B cell (primary cell): ENCODE measurements at regions of chr10 and their contacts with region 1.

Region 1: GRCh38 chr10:70146489-70147258 is at the start of gene TYSND1:
- DNase-seq: peak; percentile 93
- ATAC-seq: peak; percentile 84
- H3K4me3 ChIP-seq: peak within 1 kb of the TSS; percentile 53 to 91 (median 81)
- H3K4me3 Mint-ChIP-seq: peak within 1 kb of the TSS; percentile 96
- H3K27ac ChIP-seq: peak within 1 kb of the TSS; percentile 84 to 93
- H3K27ac Mint-ChIP-seq: peak within 1 kb of the TSS; percentile 97
- H3K4me1 ChIP-seq: peaks cover 14 to 22% of the 10 kb centered on the region in 2 donors
- H3K4me1 Mint-ChIP-seq: peaks cover 37% of the 10 kb centered on the region
- H3K27me3 ChIP-seq: no peaks in the 10 kb centered on the region
- H3K27me3 Mint-ChIP-seq: no peaks in the 10 kb centered on the region
- CTCF ChIP-seq: peak; percentile 76
- total RNA-seq, gene TYSND1: 34.1 and 34.7 TPM in 2 replicates

Region 2: GRCh38 chr10:69657430-69657829 is 489.2 kb before region 1 on chr10:
- CTCF ChIA-PET with region 1: no interaction called
- POLR2A ChIA-PET with region 1: no interaction called
- intact Hi-C with region 1: no loop called
- DNase-seq: no peak
- ATAC-seq: no peak
- H3K4me3 ChIP-seq: no peak overlapping the region
- H3K4me3 Mint-ChIP-seq: no peak overlapping the region
- H3K27ac ChIP-seq: no peak overlapping the region
- H3K27ac Mint-ChIP-seq: no peak overlapping the region
- H3K4me1 ChIP-seq: no peaks in the 10 kb centered on the region
- H3K4me1 Mint-ChIP-seq: no peaks in the 10 kb centered on the region
- H3K27me3 ChIP-seq: peaks cover 0 to 3% (median 0%) of the 10 kb centered on the region in 4 experiments
- H3K27me3 Mint-ChIP-seq: peaks cover 26% of the 10 kb centered on the region
- CTCF ChIP-seq: no peak

Region 3: DNA sequence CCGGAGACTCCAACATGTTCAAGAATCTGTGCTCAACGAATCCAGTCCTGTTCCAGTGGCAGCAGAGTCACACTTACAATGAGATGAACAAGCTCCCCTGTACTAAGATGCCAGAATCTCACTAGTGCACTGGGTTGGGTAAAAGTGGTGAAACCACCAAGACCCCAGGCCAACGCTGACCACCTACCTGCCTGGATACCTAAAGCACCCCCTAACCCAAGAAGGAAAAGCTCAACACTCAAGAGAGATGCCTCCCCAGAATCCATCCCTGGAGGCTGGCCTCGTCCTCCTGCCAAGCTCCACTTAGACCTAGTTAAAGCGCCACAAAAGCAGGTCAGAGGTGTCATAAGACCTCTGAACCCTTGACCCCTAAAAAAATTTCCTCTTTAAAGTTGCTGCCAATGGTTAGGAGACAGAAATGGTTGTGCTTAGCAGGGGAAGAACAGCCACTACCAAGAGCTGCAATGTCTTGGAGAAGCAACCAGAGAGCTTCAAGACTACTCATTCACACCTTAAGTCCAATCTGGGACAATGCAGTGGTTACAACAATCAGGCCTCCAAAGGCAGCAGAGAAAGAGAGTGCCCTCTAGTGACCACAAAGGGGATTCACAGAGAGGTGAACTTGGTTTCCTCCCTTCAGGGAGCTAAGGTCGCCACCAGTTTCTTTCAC is 188.7 kb before region 1 on chr10:
- CTCF ChIA-PET with region 1: interaction called, 14 read pairs
- POLR2A ChIA-PET with region 1: no interaction called
- intact Hi-C with region 1: no loop called
- DNase-seq: peak; percentile 23
- ATAC-seq: no peak
- H3K4me3 ChIP-seq: no peak overlapping the region
- H3K4me3 Mint-ChIP-seq: no peak overlapping the region
- H3K27ac ChIP-seq: no peak overlapping the region
- H3K27ac Mint-ChIP-seq: peak overlapping the region; percentile 59
- H3K4me1 ChIP-seq: peaks cover 6 to 18% of the 10 kb centered on the region in 2 donors
- H3K4me1 Mint-ChIP-seq: peaks cover 26% of the 10 kb centered on the region
- H3K27me3 ChIP-seq: no peaks in the 10 kb centered on the region
- H3K27me3 Mint-ChIP-seq: peaks cover 9% of the 10 kb centered on the region
- CTCF ChIP-seq: peak; percentile 55

Region 4: DNA sequence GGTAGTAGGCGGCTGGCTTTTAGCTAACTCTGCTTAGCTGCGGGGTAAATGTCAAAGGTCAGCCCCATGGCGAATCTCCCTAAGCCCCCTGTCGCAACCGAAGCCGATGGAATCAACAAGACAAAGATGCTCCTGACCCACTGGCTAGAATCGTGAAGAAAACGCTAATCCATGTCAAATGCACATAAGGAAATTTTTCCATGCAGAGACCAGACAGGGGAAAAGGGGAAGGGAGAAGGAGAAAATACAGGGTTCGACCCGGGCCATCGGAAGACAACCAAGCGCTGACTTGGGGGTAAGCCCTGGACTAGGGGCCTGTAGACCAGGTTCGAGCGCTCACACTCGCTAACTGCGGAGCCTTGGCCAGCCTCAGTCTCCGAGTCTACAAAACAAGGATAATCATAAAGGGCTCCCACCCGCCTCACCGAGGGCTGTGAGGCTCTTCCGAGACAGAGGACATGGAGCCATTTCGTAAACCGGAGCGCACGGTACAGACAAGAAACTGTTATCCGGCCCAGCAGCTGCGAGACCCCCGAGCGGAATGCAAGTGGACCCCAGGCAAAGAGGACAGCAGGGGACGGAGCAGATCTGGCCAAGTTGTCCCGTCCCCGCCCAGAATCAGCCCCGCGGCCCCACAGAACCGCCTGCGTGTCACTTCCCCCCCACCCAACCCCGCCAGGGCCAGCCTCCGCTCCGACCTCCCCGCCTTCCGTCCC is 23.1 kb after region 1 on chr10:
- CTCF ChIA-PET with region 1: interaction called, 62 read pairs
- POLR2A ChIA-PET with region 1: interaction called, 35 read pairs
- intact Hi-C with region 1: loop called (anchors 1 kb)
- DNase-seq: no peak
- ATAC-seq: peak; percentile 18
- H3K4me3 ChIP-seq: peak overlapping the region; percentile 71 to 96 (median 86)
- H3K4me3 Mint-ChIP-seq: peak overlapping the region; percentile 91
- H3K27ac ChIP-seq: peak overlapping the region; percentile 80 to 93
- H3K27ac Mint-ChIP-seq: peak overlapping the region; percentile 94
- H3K4me1 ChIP-seq: peaks cover 21 to 27% of the 10 kb centered on the region in 2 donors
- H3K4me1 Mint-ChIP-seq: peaks cover 49% of the 10 kb centered on the region
- H3K27me3 ChIP-seq: no peaks in the 10 kb centered on the region
- H3K27me3 Mint-ChIP-seq: no peaks in the 10 kb centered on the region
- CTCF ChIP-seq: no peak

Region 5: GRCh38 chr10:70355051-70356021 is 208.7 kb after region 1 on chr10:
- CTCF ChIA-PET with region 1: interaction called, 5 read pairs
- POLR2A ChIA-PET with region 1: no interaction called
- intact Hi-C with region 1: loop called (anchors 10 kb)
- DNase-seq: peak; percentile 81
- ATAC-seq: peak; percentile 81
- H3K4me3 ChIP-seq: peak overlapping the region; percentile 18 to 71 (median 48)
- H3K4me3 Mint-ChIP-seq: peak overlapping the region; percentile 90
- H3K27ac ChIP-seq: no peak overlapping the region
- H3K27ac Mint-ChIP-seq: peak overlapping the region; percentile 87
- H3K4me1 ChIP-seq: peaks cover 16 to 28% of the 10 kb centered on the region in 2 donors
- H3K4me1 Mint-ChIP-seq: peaks cover 26% of the 10 kb centered on the region
- H3K27me3 ChIP-seq: peaks cover 0 to 4% (median 0%) of the 10 kb centered on the region in 4 experiments
- H3K27me3 Mint-ChIP-seq: peaks cover 3% of the 10 kb centered on the region
- CTCF ChIP-seq: no peak

Region 6: DNA sequence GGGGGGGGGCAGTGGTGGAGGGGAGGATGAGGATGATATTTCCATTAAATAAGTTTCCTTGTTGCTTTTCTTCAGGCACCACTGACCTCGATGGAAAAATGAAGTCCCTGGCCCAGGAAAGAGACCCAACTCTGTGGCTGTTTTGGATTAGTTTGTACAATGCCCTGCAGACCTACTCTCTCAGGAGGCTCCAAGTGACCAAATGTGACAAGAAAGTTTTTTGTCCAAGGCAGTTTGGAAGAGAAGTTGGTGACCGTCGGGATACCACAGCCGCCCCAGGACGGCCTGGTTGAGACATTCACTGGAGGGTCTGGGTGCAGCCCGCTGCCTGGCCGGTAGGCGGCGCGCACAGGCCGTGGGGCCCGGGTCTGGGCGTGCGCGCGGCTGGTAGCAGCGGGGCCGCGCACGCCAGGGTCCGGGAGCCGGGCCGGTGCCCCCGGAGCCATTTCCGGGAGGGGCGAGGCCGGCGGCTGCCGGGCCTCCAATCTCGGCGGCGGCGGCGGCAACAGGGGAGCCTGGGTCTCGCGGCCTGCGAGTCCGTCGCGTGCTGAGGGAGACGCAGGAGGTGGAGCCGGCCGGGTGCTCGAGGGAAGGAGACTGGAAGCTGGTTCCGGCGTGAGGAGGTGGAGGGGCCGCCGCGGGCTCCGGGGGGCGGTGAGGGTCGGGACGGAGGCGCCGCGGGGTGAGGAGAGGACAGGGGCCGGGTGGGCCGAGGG is 669.0 kb after region 1 on chr10 and contains the start of gene SGPL1:
- CTCF ChIA-PET with region 1: no interaction called
- POLR2A ChIA-PET with region 1: no interaction called
- intact Hi-C with region 1: loop called (anchors 10 kb)
- DNase-seq: peak; percentile 89
- ATAC-seq: peak; percentile 94
- H3K4me3 ChIP-seq: peak within 1 kb of the TSS; percentile 61 to 79 (median 68)
- H3K4me3 Mint-ChIP-seq: peak within 1 kb of the TSS; percentile 99
- H3K27ac ChIP-seq: peak within 1 kb of the TSS; percentile 53 to 79
- H3K27ac Mint-ChIP-seq: peak within 1 kb of the TSS; percentile 97
- H3K4me1 ChIP-seq: peaks cover 7 to 17% of the 10 kb centered on the region in 2 donors
- H3K4me1 Mint-ChIP-seq: peaks cover 25% of the 10 kb centered on the region
- H3K27me3 ChIP-seq: no peaks in the 10 kb centered on the region
- H3K27me3 Mint-ChIP-seq: no peaks in the 10 kb centered on the region
- CTCF ChIP-seq: peak; percentile 97
- total RNA-seq, gene SGPL1: 41.9 and 46.2 TPM in 2 replicates